BJ (cell line): ENCODE measurements at regions of chr14 and their contacts with region 1.

Region 1: DNA sequence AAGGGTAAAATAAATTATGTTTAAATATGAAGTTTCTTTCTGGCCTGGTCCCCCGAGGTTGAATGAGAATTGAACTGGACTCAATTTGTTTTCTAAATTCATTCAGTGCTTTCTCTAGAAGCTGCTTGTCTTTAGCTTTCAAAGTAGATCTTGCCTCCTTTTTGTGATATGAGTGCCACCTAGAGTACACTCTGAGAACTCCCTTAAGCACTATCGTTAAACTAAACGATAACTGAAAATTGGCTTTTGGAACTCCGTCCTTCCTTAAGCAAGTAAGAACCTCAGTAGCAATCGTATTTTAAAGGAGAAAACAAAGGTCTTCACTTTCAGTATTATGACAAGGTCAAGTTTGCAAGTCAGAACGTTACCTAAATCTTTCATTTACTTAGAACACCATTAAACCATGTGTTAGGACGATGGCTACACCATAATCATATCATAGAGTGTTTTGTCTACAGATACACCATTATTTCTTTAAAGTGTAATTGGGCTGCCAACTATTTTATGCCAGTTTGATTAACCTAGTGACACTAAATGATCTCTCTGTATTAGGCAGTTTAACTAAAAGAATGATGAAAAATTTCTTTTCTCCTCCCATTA is 364.8 kb downstream of the SNAPC1 start:
- DNase-seq: no peak
- H3K4me3 ChIP-seq: no peak overlapping the region
- H3K27me3 ChIP-seq: no peaks in the 10 kb centered on the region
- CTCF ChIP-seq: peak; percentile 75

Region 2: DNA sequence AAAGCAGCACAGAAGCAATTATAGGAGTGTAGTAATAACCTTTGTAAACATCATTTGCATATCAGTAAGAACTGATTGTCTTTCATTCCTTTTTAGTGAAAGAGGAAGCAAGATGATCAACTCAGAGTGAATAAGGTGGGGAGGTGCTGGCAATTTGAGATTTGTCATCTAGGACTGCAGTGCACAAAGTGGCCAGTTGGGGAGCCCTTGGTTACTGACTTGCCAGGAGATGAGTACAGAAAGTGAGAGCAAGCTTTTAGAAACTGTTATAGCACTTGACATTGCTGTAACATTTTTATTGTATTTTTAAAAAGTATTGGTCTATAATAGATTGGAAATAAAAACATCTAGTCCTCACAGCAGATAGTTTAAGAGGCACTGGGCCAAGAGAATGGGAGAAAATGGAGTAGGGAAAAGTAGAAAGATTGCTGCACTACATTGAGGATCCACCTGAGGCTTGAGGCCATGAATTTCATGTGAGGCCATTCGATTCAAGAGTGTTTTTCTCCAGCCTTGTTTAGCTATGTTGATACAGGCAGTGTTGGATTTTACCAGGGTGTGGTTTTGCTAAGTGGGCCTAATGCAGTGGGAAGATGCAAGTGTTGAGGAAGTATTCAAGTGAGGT is 266.6 kb before region 1 on chr14:
- CTCF ChIA-PET with region 1: interaction called, 13 read pairs
- POLR2A ChIA-PET with region 1: no interaction called
- DNase-seq: no peak
- H3K4me3 ChIP-seq: no peak overlapping the region
- H3K27me3 ChIP-seq: 0 out of 2 replicates have a peak, but pooled peaks cover 3% of the 10 kb centered on the region
- CTCF ChIP-seq: peak; percentile 89

Region 3: GRCh38 chr14:61894452-61895077 is 232.4 kb before region 1 on chr14:
- CTCF ChIA-PET with region 1: interaction called, 36 read pairs
- POLR2A ChIA-PET with region 1: no interaction called
- DNase-seq: no peak
- H3K4me3 ChIP-seq: no peak overlapping the region
- H3K27me3 ChIP-seq: no peaks in the 10 kb centered on the region; the same call in 1 of the 2 replicates
- CTCF ChIP-seq: peak; percentile 68

Region 4: GRCh38 chr14:61925043-61925442 is 201.9 kb before region 1 on chr14:
- CTCF ChIA-PET with region 1: interaction called, 94 read pairs
- POLR2A ChIA-PET with region 1: no interaction called
- DNase-seq: no peak
- H3K4me3 ChIP-seq: no peak overlapping the region
- H3K27me3 ChIP-seq: no peaks in the 10 kb centered on the region
- CTCF ChIP-seq: peak; percentile 48